ENCODE measurements at regions of chr9 and their contacts with region 1.

Region 1: GRCh38 chr9:94182532-94182931 is 76.6 kb upstream of the ZNF169 start:
- DNase-seq: no peak
- ATAC-seq: no peak
- H3K4me3 ChIP-seq: no peak overlapping the region
- H3K27ac ChIP-seq: no peak overlapping the region
- H3K4me1 ChIP-seq: peaks cover 4% of the 10 kb centered on the region; the same call in 1 of the 2 replicates
- H3K27me3 ChIP-seq: no peaks in the 10 kb centered on the region
- CTCF ChIP-seq: no peak

Region 2: GRCh38 chr9:93860694-93861658 is 321.6 kb before region 1 on chr9:
- CTCF ChIA-PET with region 1: no interaction called
- POLR2A ChIA-PET with region 1: no interaction called
- in situ Hi-C with region 1: no loop called
- intact Hi-C with region 1: no loop called
- DNase-seq: no peak
- ATAC-seq: no peak
- H3K4me3 ChIP-seq: no peak overlapping the region
- H3K27ac ChIP-seq: no peak overlapping the region
- H3K4me1 ChIP-seq: no peaks in the 10 kb centered on the region
- H3K27me3 ChIP-seq: no peaks in the 10 kb centered on the region; the same call in 1 of the 2 replicates
- CTCF ChIP-seq: no peak

Region 3: GRCh38 chr9:94166237-94166963 is 16.1 kb before region 1 on chr9:
- CTCF ChIA-PET with region 1: no interaction called
- POLR2A ChIA-PET with region 1: interaction called, 13 read pairs
- in situ Hi-C with region 1: no loop called
- intact Hi-C with region 1: no loop called
- DNase-seq: peak; percentile 75
- ATAC-seq: peak; percentile 85
- H3K4me3 ChIP-seq: peak overlapping the region; percentile 90 to 92
- H3K27ac ChIP-seq: peak overlapping the region; percentile 51; the same call in 1 of the 2 replicates
- H3K4me1 ChIP-seq: peaks cover 14% of the 10 kb centered on the region
- H3K27me3 ChIP-seq: no peaks in the 10 kb centered on the region
- CTCF ChIP-seq: 0 out of 2 replicates have a peak, but pooled peaks have one; percentile 17